Activated B cell treated with CpG ODN at 0.5 μM for 24 hours (primary cell): ENCODE measurements at regions of chr6 and their contacts with region 1.

Region 1: DNA sequence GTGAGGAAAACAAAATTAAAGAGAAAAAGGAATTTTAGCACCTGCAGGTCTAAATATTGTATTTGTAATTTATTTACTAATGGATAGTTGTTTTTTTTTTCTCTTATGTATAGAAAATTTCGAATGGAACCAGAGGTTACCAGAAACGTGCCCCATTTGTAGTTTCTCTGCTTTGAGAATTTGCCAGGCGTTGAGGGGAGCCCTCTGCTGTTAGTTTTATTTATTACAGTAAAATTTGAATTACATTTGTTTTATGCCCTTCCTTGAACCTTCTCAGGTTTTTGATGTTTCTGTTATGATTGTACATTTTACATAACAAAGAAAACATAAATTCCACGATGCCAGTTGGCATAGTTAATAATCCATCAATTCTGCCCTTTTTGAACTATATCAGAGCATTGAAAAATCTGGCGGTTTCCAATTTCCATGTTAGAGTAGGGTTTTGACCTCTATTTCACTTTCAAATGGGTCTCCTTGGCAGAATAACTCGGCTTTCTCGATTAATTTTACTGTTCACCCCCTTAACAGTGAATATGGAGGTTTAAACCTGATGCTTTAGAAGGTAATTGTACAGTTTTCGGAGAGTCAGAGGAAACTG is 35.1 kb upstream of the RFPL4B start:
- DNase-seq: no peak
- ATAC-seq: no peak
- H3K4me3 Mint-ChIP-seq: no peak overlapping the region
- H3K27ac Mint-ChIP-seq: no peak overlapping the region
- H3K4me1 Mint-ChIP-seq: peaks cover 12% of the 10 kb centered on the region
- H3K27me3 Mint-ChIP-seq: no peaks in the 10 kb centered on the region
- CTCF ChIP-seq: no peak

Region 2: GRCh38 chr6:111709615-111710398 is 602.2 kb before region 1 on chr6:
- CTCF ChIA-PET with region 1: no interaction called
- POLR2A ChIA-PET with region 1: no interaction called
- intact Hi-C with region 1: loop called (anchors 10 kb)
- DNase-seq: no peak
- ATAC-seq: peak; percentile 97
- H3K4me3 Mint-ChIP-seq: peak overlapping the region; percentile 19
- H3K27ac Mint-ChIP-seq: no peak overlapping the region
- H3K4me1 Mint-ChIP-seq: peaks cover 4% of the 10 kb centered on the region
- H3K27me3 Mint-ChIP-seq: no peaks in the 10 kb centered on the region
- CTCF ChIP-seq: peak; percentile 44

Region 3: DNA sequence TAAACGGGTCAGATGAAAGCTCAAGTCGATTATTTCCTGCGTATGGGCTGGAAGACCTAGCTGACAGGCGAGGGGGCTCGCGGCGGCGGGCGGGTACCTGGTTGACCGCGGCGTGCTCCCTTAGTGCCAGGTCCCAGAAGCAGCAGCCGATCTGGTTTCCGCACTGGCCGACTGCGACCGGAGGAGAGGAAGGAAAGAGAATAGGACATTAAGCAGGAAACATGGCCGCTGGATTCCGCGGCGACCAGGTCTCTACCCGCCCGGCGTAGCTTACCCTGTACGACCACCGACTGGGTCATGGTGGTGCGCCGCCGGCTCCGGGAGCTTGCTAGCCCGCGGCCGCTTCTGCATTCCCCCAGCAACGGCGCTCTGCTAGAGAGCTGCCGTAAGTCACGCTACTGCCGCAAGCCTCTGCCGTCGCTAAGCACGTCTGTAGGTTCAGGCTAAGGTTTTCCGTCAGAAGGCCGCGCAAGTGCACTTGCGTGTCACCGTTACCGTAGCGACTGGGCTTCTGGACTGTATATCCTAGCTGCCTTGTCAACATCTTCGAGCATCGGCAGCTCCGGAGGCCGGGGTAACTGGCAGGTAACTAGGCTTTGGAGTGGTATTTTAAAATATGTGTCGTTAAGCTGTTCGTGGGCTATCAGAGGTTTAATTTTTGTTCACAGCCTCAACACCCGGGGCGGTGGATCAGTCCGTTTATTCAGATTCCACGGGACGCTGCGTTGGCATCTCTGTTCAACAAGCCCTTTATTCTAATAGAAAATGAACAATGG is 224.7 kb before region 1 on chr6 and contains the starts of genes FAM229B and TUBE1:
- CTCF ChIA-PET with region 1: no interaction called
- POLR2A ChIA-PET with region 1: no interaction called
- intact Hi-C with region 1: loop called (anchors 1 kb)
- DNase-seq: peak; percentile 74
- ATAC-seq: peak; percentile 96
- H3K4me3 Mint-ChIP-seq: no peak within 1 kb of the TSS
- H3K27ac Mint-ChIP-seq: no peak within 1 kb of the TSS
- H3K4me1 Mint-ChIP-seq: no peaks in the 10 kb centered on the region
- H3K27me3 Mint-ChIP-seq: peaks cover 14% of the 10 kb centered on the region
- CTCF ChIP-seq: no peak
- total RNA-seq, gene FAM229B: 2.0 and 2.6 TPM in 2 replicates
- total RNA-seq, gene TUBE1: 24.1 and 28.0 TPM in 2 replicates

Region 4: DNA sequence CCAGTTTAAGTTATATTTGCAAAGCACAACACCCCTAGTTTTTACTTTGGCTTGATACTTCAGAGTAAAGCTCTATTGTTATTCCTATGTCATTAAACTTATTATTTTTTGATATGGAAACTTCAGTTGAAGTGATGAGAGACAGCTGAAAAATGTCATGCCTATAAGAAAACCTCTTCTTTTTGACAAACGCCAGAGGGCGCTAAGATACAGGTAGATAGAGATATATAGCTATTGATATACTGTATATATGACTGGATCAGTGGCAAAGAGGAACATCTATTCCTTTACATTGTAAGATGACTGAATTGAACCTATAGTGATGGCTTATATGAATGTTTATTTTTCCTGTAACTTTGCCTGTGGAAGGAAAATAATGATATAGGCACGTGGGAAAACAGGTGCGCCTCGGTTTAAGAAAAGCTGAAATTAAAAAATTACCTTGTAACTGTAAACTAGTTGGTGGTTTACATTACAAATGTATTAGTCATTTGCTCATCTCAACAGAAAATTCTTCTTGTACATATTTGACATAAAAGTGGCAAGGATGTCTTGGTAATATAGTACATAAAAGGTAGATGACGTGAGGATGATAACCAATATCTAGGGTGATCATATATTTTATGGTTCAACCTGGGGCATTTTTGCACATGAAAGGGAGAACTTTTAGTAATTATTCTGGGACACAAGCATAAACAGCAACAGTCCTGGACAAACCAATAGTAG is 131.8 kb before region 1 on chr6:
- CTCF ChIA-PET with region 1: interaction called, 47 read pairs
- POLR2A ChIA-PET with region 1: interaction called, 3 read pairs
- intact Hi-C with region 1: loop called (anchors 1 kb)
- DNase-seq: no peak
- ATAC-seq: peak; percentile 57
- H3K4me3 Mint-ChIP-seq: no peak overlapping the region
- H3K27ac Mint-ChIP-seq: no peak overlapping the region
- H3K4me1 Mint-ChIP-seq: no peaks in the 10 kb centered on the region
- H3K27me3 Mint-ChIP-seq: peaks cover 12% of the 10 kb centered on the region
- CTCF ChIP-seq: no peak

Region 5: GRCh38 chr6:112296122-112296521 is 15.9 kb before region 1 on chr6:
- CTCF ChIA-PET with region 1: interaction called, 7 read pairs
- POLR2A ChIA-PET with region 1: no interaction called
- intact Hi-C with region 1: loop called (anchors 1 kb)
- DNase-seq: no peak
- ATAC-seq: no peak
- H3K4me3 Mint-ChIP-seq: no peak overlapping the region
- H3K27ac Mint-ChIP-seq: no peak overlapping the region
- H3K4me1 Mint-ChIP-seq: no peaks in the 10 kb centered on the region
- H3K27me3 Mint-ChIP-seq: peaks cover 8% of the 10 kb centered on the region
- CTCF ChIP-seq: no peak

Region 6: GRCh38 chr6:113879186-113880096 is 1567.4 kb after region 1 on chr6:
- CTCF ChIA-PET with region 1: interaction called, 4 read pairs
- POLR2A ChIA-PET with region 1: no interaction called
- intact Hi-C with region 1: loop called (anchors 5 kb)
- DNase-seq: no peak
- ATAC-seq: peak; percentile 100
- H3K4me3 Mint-ChIP-seq: no peak overlapping the region
- H3K27ac Mint-ChIP-seq: no peak overlapping the region
- H3K4me1 Mint-ChIP-seq: peaks cover 7% of the 10 kb centered on the region
- H3K27me3 Mint-ChIP-seq: peaks cover 5% of the 10 kb centered on the region
- CTCF ChIP-seq: no peak

Region 7: DNA sequence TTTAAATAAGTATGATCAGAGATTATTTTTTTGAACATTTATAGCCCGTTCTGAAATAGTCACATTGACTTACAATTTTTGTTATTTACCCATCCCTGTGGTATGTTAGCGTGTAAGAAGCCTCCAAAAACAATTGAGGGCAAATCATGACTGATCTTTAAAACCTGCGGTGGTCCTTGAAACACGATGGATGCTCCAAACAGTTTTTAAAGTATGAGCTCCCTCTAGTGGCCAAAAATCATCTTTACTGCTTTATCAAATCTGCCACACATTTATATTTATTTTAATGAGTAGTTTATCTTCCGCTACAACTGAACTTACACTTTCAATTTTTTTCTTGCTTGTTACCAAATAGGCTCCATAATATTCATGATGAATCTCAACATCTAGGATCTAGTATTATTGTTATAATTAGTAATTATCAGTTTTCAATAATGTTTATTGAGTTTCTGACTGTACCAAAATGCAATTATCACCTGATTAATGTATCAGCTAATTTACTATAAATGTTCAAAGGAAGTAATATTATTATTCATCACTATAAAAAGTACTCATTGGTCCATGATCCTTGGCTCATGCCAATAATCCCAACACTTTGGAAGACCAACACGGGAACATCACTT is 1597.3 kb after region 1 on chr6:
- CTCF ChIA-PET with region 1: no interaction called
- POLR2A ChIA-PET with region 1: no interaction called
- intact Hi-C with region 1: loop called (anchors 1 kb)
- DNase-seq: no peak
- ATAC-seq: peak; percentile 37
- H3K4me3 Mint-ChIP-seq: no peak overlapping the region
- H3K27ac Mint-ChIP-seq: no peak overlapping the region
- H3K4me1 Mint-ChIP-seq: no peaks in the 10 kb centered on the region
- H3K27me3 Mint-ChIP-seq: peaks cover 2% of the 10 kb centered on the region
- CTCF ChIP-seq: peak; percentile 63